ENCODE measurements at regions of chr16 and their contacts with region 1.

Region 1: DNA sequence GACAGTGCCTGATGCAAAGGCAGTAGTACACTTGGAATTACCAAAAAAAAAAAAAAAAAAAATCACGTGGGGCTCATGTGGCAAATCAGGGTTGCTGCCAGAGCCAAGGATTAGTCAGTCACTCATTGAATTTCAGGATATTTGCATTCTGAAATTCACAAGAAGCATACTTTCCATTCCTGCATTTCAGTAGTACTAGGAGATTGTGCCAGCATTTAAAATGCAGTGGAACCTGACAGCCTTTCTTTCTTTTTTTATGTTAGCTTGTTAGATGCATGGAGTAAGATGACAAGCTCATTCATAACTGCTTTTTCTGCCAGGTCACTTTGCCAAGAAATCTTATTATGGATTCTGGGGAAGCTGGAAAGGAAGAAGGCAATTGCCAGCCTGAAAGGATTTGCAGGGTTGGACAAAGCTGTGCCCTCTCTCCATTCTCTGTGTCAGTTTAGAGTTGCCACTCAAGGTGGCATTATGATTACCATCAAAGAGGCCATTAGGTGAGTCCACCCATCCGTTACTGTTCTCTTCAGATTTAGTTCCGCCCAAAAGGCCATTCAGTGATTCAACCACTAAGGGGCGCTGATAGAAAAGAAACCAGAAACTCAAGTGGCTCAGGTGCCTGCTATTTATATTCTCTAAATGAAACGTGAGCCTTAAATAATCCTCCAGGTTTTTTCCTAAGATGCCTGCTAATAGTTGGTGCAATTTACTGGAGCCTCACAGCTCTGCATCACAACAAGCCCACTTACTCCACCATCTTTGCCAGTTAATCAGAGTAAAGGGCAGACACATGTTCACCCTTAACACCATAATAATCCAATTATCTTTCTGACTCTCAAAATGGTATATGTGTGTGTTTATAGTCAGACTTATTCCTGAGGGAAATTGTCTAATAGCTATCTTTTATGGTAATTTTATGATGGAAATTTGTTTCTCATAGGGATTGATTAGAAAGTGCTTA is 59.0 kb downstream of the TANGO6 start:
- DNase-seq: peak; percentile 46
- H3K4me3 ChIP-seq: no peak overlapping the region
- CTCF ChIP-seq: peak; percentile 53

Region 2: DNA sequence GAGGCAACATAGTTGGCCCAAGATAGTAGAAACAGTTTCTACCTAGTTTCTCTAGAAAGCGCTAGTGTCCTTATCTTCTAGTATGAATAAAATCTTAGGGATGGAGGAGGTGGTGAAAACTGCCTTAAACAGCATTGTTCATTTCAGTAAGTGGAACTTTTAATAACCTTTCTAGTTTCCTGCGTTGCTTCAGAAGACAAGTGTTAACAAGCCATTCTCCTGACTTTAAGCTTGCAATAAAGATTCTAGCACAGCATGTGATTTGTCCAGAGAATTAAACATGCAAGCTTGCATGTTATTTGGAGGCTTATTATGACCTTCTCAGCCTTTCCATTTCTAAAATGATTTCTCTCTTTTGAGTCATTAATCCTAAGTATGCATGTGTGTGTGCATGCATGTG is 13.3 kb after region 1 on chr16:
- CTCF ChIA-PET with region 1: interaction called, 25 read pairs
- POLR2A ChIA-PET with region 1: no interaction called
- DNase-seq: no peak
- H3K4me3 ChIP-seq: no peak overlapping the region
- CTCF ChIP-seq: no peak

Region 3: GRCh38 chr16:68997564-68997963 is 95.3 kb after region 1 on chr16:
- CTCF ChIA-PET with region 1: no interaction called
- POLR2A ChIA-PET with region 1: no interaction called
- DNase-seq: no peak
- H3K4me3 ChIP-seq: no peak overlapping the region
- CTCF ChIP-seq: no peak

Region 4: DNA sequence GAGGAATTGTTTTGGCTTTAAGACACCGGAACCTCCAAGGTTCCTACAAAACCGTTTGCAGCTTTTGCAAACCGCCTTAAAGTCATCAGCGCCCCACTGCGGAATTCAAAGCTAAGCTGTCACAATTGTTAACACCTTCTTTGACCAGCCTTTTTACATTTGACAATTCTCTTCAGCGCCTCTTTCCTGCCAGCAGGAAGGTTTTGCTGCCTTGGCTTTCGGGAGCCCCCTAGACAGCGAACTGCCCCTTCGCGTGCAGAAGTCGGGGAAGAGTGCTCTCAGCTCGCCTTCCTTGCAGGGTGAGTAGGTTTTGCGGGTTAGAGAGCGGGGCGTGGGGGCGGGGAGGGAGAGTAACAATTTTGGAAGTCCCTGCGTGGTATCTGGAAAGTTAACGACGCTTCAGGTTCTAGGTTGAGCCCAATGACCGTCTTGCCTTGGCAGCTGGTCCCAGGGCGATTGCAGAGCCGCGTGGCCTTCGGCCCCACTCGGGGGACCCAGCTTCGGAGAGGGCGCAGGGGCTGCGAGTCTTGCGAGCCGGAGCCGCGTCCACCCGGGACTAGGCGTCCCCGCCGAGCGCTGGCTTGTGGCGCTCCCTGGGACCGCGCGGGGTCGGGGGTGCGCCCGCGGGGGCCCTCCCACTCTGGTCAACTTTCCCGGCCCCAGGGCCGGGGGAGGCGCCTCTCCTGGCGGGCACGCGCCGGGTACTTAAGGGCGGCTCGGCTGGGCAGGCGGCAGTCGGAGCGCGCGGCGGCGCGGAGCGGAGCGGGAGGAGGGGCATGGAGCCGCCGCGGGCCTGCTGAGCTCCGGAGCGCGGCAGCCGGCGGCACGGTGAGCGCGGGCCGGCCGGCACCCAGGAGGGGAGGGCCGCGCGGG is 203.4 kb after region 1 on chr16 and contains the start of gene HAS3:
- CTCF ChIA-PET with region 1: interaction called, 33 read pairs
- POLR2A ChIA-PET with region 1: no interaction called
- DNase-seq: no peak
- H3K4me3 ChIP-seq: peak within 1 kb of the TSS; percentile 63
- CTCF ChIP-seq: peak; percentile 23

Region 5: GRCh38 chr16:69112285-69113129 is 210.2 kb after region 1 on chr16:
- CTCF ChIA-PET with region 1: interaction called, 30 read pairs
- POLR2A ChIA-PET with region 1: interaction called, 3 read pairs
- DNase-seq: no peak
- H3K4me3 ChIP-seq: no peak overlapping the region
- CTCF ChIP-seq: peak; percentile 89

Measured in AG04449 (cell line).